Activated CD8-positive, alpha-beta memory T cell treated with anti-CD3 and anti-CD28 coated beads, Interleukin-2, amount 10 ng/mL, durations not matched to agents 7 days and 5 days (primary cell): ENCODE measurements at regions of chr10 and their contacts with region 1.

Region 1: DNA sequence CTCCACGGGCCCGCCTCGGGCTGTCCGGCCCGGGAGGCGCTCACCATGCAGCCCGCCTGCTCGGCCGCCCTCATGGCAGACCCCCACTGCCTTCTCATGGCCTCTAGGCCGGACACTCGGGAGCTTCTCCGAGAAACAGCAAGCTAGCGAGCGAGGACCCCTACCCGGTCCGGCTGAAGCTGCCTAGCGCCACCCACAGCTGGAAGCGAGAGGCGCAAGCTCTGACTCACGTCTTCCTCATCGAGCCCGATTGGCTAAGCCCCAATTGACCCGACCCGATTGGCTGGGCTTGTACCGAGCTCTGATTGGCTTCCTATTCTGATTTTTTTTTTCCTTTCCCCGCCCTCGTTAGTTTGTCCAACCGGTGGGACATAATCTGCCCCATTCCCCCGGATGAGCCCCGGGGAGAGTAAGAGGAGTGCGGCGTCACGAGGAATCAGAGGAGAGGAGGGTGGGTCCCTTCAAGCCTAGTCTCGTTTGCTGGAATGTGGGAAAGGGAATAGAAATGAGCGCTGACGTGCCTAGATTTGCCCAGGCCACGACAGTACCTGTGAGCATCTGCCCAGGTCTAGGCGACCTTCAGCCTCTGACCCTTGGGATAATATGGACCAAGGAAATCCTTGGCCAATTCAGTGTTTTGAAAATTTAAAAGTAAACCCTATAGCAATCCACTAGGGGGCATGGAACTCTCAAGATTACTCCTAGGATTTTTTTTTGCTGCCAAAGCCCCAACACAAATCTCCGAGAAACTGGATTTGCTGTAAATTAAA is at the start of gene TYSND1:
- DNase-seq: peak; percentile 97
- ATAC-seq: peak; percentile 86
- H3K4me3 Mint-ChIP-seq: peak within 1 kb of the TSS; percentile 87
- H3K27ac Mint-ChIP-seq: peak within 1 kb of the TSS; percentile 91
- H3K4me1 Mint-ChIP-seq: peaks cover 32% of the 10 kb centered on the region
- H3K27me3 Mint-ChIP-seq: no peaks in the 10 kb centered on the region
- total RNA-seq, gene TYSND1: 12.4 to 13.8 TPM

Region 2: GRCh38 chr10:70034232-70034631 is 112.4 kb before region 1 on chr10:
- CTCF ChIA-PET with region 1: no interaction called
- DNase-seq: no peak
- ATAC-seq: no peak
- H3K4me3 Mint-ChIP-seq: no peak overlapping the region
- H3K27ac Mint-ChIP-seq: no peak overlapping the region
- H3K4me1 Mint-ChIP-seq: peaks cover 5% of the 10 kb centered on the region
- H3K27me3 Mint-ChIP-seq: peaks cover 35% of the 10 kb centered on the region

Region 3: DNA sequence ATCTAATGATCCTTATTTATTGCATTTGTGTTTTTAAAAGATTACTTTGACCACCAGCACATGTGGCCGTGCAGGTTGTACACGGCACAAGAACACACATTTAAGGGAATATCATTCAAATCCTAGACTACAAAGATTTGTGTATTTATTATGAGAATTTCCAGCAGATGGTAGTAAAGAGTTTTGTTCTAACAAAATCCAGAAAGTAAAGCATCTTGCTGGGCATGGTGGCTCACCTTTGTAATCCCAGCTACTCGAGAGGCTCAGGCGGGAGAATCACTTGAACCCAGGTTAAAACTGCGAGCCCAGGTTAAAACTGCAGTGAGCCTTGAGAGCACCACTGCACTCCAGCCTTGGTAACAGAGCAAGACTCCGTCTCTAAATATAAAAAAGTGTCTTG is 62.5 kb before region 1 on chr10:
- CTCF ChIA-PET with region 1: interaction called, 17 read pairs
- DNase-seq: no peak
- ATAC-seq: no peak
- H3K4me3 Mint-ChIP-seq: no peak overlapping the region
- H3K27ac Mint-ChIP-seq: no peak overlapping the region
- H3K4me1 Mint-ChIP-seq: no peaks in the 10 kb centered on the region
- H3K27me3 Mint-ChIP-seq: peaks cover 2% of the 10 kb centered on the region

Region 4: DNA sequence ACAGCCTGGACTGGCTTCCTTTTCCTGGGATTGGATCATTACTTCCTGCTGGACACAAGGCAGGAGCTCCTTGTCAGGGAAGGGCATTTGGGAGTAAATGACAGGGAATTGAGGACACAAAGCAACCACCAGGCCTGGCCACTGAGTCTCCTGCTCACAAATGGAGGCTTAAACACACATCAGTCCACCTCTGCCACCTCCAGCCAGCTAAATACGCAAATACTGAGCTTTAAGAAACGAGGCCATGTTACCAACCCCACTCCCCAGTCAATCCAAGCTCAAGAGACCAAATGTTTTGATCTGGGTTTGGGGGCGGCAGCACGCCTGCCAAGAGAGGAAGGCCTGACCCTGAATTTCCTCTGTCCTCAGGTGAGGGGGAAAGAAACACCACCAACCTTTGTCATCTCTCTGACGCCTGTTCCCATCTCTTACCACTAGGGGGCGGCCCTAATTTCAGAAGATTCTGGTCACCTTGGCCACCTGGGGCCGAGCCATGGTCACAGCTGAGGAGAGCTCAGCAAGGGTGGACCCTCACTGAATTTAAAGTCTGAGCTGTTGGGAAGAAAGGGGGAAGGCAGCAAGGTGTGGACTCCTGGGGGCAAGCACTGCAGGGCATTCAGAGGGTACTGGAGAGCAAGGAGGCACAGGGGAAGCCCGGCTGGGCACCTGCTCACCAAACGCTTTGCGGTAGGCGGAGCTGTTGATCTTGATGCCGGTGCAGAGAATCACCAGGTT is 30.6 kb before region 1 on chr10:
- CTCF ChIA-PET with region 1: interaction called, 69 read pairs
- DNase-seq: peak; percentile 67
- ATAC-seq: peak; percentile 79
- H3K4me3 Mint-ChIP-seq: no peak overlapping the region
- H3K27ac Mint-ChIP-seq: no peak overlapping the region
- H3K4me1 Mint-ChIP-seq: peaks cover 11% of the 10 kb centered on the region
- H3K27me3 Mint-ChIP-seq: no peaks in the 10 kb centered on the region

Region 5: GRCh38 chr10:70132098-70133029 is 14.3 kb before region 1 on chr10 and contains the start of gene AIFM2:
- CTCF ChIA-PET with region 1: interaction called, 21 read pairs
- DNase-seq: peak; percentile 65
- ATAC-seq: peak; percentile 94
- H3K4me3 Mint-ChIP-seq: peak within 1 kb of the TSS; percentile 83
- H3K27ac Mint-ChIP-seq: peak within 1 kb of the TSS; percentile 83
- H3K4me1 Mint-ChIP-seq: peaks cover 32% of the 10 kb centered on the region
- H3K27me3 Mint-ChIP-seq: no peaks in the 10 kb centered on the region
- total RNA-seq, gene AIFM2: 12.6 to 13.8 TPM

Region 6: GRCh38 chr10:70169649-70170364 is 23.1 kb after region 1 on chr10:
- CTCF ChIA-PET with region 1: interaction called, 21 read pairs
- DNase-seq: no peak
- ATAC-seq: peak; percentile 4
- H3K4me3 Mint-ChIP-seq: peak overlapping the region; percentile 88
- H3K27ac Mint-ChIP-seq: peak overlapping the region; percentile 93
- H3K4me1 Mint-ChIP-seq: peaks cover 68% of the 10 kb centered on the region
- H3K27me3 Mint-ChIP-seq: no peaks in the 10 kb centered on the region